GM12878 (cell line): ENCODE measurements at regions of chr17 and their contacts with region 1.

Region 1: GRCh38 chr17:75601057-75602051 is 13.8 kb downstream of the MYO15B start:
- DNase-seq: no peak
- ATAC-seq: peak; percentile 94
- H3K4me3 ChIP-seq: no peak overlapping the region
- H3K27ac ChIP-seq: no peak overlapping the region
- H3K4me1 ChIP-seq: no peaks in the 10 kb centered on the region
- H3K27me3 ChIP-seq: no peaks in the 10 kb centered on the region
- CTCF ChIP-seq: peak; percentile 74 to 91 (median 79)
- EP300 ChIP-seq: no peak
- POLR2A ChIP-seq: no peak
- RAD21 ChIP-seq: peak; percentile 45

Region 2: DNA sequence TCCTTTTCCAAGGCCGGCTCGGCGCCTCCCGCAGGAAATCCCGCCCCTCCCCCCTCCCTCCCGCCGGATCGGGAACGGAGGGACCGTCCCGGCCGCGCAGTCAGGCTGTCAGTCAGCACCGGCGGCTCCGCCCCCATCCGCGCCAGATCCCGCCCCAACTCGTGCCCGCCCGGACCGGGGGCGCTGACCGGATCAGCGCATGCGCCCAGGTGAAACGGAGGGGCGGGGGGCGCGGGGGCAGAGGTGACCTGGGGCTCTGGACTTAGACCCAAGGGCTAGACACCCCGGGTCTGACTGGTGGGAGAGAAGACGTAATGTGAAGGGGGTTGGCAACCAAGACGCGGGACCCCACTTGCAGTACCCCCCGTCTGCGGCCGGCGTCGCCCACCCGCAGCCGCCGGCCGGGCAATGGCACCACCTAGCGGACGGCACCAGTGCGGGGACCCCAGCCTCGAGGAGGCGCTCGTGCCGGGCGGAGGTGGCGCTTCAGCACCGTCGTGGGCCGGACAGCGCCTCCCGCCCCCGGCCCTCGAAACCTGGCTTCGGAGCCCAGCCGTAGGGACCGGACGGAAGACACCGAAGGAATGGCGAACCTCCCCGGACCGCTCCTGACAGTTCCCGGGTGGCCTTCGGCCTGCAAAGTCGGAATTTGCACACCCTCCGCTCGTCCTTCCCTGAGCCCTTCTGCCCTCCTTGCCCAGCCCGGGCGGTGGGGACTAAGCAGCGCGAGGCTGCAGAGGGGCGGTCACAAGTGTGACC is 85.7 kb before region 1 on chr17 and contains the start of gene CASKIN2:
- CTCF ChIA-PET with region 1: no interaction called
- POLR2A ChIA-PET with region 1: no interaction called
- RAD21 ChIA-PET with region 1: no interaction called
- SMC1A ChIA-PET with region 1: no interaction called
- in situ Hi-C with region 1: no loop called
- intact Hi-C with region 1: no loop called
- DNase-seq: peak; percentile 30
- ATAC-seq: peak; percentile 71
- H3K4me3 ChIP-seq: peak within 1 kb of the TSS; percentile 90
- H3K27ac ChIP-seq: peak within 1 kb of the TSS; percentile 10; the same call in 1 of the 2 replicates
- H3K4me1 ChIP-seq: peaks cover 20% of the 10 kb centered on the region
- H3K27me3 ChIP-seq: no peaks in the 10 kb centered on the region
- CTCF ChIP-seq: peak; percentile 95 to 99 (median 95)
- EP300 ChIP-seq: no peak
- POLR2A ChIP-seq: no peak
- RAD21 ChIP-seq: peak; percentile 65
- polyA plus RNA-seq, gene CASKIN2: 0.02 TPM in 1 of 2 experiments, not detected in the other

Region 3: DNA sequence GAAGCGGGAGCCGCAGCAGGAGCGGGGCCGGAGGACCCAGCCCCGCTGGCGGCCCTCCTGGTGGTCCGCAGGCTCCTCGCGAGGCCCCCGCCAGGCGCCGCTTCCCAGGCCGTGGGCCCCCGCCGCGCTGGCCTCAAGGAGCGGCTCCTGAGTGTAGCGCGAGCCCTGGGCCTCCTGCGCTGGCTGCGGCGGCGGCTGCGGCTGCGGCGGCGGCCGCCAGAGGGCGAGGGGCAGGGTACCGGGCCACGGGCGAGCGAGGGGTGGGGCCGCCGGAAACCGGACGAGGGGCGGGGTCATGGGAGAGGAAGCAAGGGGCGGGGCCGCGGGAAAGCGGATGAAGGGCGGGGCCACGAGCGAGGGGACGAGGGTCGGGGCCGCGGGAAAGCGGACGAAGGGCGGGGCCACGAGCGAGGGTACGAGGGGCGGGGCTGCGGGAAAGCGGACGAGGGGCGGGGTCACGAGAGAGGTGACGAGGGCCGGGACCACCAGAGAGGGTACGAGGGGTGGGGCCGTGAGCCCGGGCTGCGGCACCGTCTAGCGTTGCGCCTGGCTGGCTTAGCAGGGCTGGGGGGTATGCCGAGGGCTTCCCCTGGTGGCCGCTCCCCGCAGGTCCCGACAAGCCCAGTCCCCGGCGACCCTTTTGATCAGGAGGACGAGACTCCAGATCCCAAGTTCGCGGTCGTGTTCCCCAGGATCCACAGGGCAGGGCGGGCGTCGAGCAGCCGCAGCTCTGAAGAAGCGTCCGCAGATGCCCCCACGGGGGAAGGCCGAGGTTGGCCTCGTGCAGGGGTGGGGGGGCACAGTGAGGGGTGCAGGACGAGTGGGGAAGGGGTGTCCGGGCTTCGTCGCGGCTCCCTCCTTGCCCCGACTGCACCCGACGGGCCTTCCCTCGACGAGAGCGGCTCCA is 12.1 kb before region 1 on chr17:
- CTCF ChIA-PET with region 1: interaction called, 20 read pairs
- POLR2A ChIA-PET with region 1: no interaction called
- RAD21 ChIA-PET with region 1: no interaction called
- SMC1A ChIA-PET with region 1: no interaction called
- in situ Hi-C with region 1: no loop called
- intact Hi-C with region 1: no loop called
- DNase-seq: peak; percentile 48
- ATAC-seq: peak; percentile 90
- H3K4me3 ChIP-seq: peak overlapping the region; percentile 69
- H3K27ac ChIP-seq: peak overlapping the region; percentile 33; the same call in 1 of the 2 replicates
- H3K4me1 ChIP-seq: 0 out of 2 replicates have a peak, but pooled peaks cover 4% of the 10 kb centered on the region
- H3K27me3 ChIP-seq: peaks cover 5 to 9% of the 10 kb centered on the region in 2 experiments
- CTCF ChIP-seq: peak; percentile 46 to 66 (median 65)
- EP300 ChIP-seq: no peak
- POLR2A ChIP-seq: peak; percentile 73
- RAD21 ChIP-seq: peak; percentile 44

Region 4: DNA sequence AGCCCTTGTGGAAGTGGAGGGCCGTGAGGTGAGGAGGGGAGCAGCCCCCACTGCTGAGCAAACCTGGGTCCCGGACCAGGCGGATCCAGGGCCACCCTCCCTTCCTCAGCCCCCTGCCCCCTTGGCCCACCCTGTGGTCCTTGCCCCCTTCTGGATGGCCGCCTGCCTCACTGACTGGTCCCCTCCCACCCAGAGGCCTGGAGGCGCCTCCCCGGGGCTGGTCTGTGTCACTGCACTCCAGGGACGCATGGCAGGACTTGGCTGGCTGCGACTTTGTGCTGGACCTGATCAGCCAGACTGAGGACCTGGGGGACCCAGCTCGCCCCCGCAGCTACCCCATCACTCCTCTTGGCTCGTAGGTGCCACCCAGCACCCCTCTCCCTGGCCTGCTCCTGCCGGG is 12.7 kb after region 1 on chr17:
- CTCF ChIA-PET with region 1: interaction called, 16 read pairs
- POLR2A ChIA-PET with region 1: interaction called, 4 read pairs
- RAD21 ChIA-PET with region 1: no interaction called
- SMC1A ChIA-PET with region 1: interaction called, 3 read pairs
- in situ Hi-C with region 1: no loop called
- intact Hi-C with region 1: no loop called
- DNase-seq: no peak
- ATAC-seq: peak; percentile 59
- H3K4me3 ChIP-seq: no peak overlapping the region
- H3K27ac ChIP-seq: no peak overlapping the region
- H3K4me1 ChIP-seq: no peaks in the 10 kb centered on the region
- H3K27me3 ChIP-seq: no peaks in the 10 kb centered on the region
- CTCF ChIP-seq: peak in 2 of 3 experiments; percentile 17 to 38; a peak in 3 of 6 replicates
- EP300 ChIP-seq: no peak
- POLR2A ChIP-seq: no peak
- RAD21 ChIP-seq: peak; percentile 24; the same call in 1 of the 2 replicates

Region 5: DNA sequence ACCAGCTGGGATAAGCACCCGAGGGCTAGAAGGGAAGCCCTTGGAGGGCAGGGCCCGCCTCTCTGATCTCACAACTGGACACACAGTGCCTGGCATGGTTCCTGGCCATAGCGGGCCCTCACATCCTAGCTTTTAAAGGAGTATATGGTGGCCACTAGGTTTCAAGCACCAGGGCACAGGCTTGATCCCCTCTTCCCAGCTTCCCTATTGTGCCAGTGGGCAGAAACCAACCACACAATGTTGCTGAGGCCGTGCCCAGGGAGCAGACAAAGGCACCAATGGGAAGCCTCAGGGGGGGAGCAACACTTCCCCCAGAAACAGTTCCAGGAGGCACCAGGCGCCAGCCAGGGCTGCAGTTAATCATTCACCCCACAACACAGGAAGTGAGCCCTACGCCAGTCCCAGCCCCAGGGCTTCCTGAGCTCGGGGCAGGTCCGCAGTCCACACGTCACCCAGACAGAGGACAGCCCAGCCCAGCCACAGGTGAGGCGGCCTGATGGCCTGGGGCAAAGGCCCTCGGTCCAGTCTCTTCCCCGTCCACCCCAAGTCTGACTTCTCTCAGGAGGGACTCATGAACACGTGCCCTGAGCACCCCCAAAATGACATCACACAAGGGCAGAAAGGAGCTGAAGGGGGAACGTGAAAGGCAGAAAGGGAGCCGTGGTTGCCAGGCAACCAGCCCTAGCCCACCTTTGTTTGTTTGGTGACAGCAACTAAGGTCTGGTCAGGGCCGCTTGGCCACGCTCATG is 44.7 kb after region 1 on chr17:
- CTCF ChIA-PET with region 1: interaction called, 16 read pairs
- POLR2A ChIA-PET with region 1: no interaction called
- RAD21 ChIA-PET with region 1: interaction called, 8 read pairs
- SMC1A ChIA-PET with region 1: interaction called, 4 read pairs
- in situ Hi-C with region 1: no loop called
- intact Hi-C with region 1: no loop called
- DNase-seq: peak; percentile 42
- ATAC-seq: peak; percentile 100
- H3K4me3 ChIP-seq: no peak overlapping the region
- H3K27ac ChIP-seq: peak overlapping the region; percentile 69
- H3K4me1 ChIP-seq: peaks cover 14% of the 10 kb centered on the region
- H3K27me3 ChIP-seq: no peaks in the 10 kb centered on the region
- CTCF ChIP-seq: no peak
- EP300 ChIP-seq: peak in 1 of 2 experiments; percentile 25; a peak in 1 of 4 replicates
- POLR2A ChIP-seq: no peak
- RAD21 ChIP-seq: no peak